IMR-90 (cell line): ENCODE measurements at regions of chr17 and their contacts with region 1.

Region 1: DNA sequence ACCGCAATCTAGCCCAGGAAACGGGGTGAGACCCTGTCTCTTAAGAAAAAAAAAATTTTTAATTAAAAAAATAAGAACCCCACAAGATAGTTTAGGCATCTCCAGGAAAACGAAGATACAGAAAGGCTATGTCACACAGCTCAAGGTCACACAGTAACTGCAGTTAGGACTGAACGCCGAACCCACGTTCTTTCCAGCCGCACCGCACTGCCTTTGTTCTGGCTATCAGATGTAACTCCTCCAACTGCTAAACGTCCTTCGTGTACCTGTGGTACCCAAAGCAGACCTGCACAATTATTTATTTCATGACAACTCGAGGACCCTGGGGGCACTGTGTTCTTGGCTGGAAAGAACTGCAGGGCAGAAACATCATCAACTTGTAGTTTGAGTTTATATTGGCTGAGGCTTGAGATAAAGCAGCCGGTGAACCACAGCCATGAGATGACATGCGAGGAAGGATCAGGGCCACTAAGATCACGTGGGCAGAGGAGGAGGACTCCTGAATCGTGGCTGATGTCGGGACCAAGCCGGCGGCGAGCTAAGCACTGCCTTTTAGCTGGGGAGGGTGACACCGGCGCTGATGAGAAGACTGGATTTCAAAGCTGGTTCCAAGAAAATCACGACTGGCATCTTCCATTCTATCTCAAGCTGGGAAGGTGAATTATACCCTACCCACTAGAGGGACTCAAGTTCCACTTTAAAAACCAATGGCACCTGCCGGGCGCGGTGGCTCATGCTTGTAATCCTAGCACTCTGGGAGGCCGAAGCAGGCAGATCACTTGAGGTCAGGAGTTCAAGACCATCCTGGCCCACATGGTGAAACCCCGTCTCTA is 20.7 kb upstream of the MNT start:
- DNase-seq: peak; percentile 50
- ATAC-seq: peak; percentile 10; the same call in 1 of the 2 replicates
- H3K4me3 ChIP-seq: no peak overlapping the region
- H3K27ac ChIP-seq: peak overlapping the region; percentile 50; the same call in 1 of the 2 replicates
- H3K4me1 ChIP-seq: peaks cover 22% of the 10 kb centered on the region
- H3K27me3 ChIP-seq: no peaks in the 10 kb centered on the region
- CTCF ChIP-seq: peak; percentile 42
- POLR2A ChIP-seq: no peak
- RAD21 ChIP-seq: peak; percentile 58

Region 2: DNA sequence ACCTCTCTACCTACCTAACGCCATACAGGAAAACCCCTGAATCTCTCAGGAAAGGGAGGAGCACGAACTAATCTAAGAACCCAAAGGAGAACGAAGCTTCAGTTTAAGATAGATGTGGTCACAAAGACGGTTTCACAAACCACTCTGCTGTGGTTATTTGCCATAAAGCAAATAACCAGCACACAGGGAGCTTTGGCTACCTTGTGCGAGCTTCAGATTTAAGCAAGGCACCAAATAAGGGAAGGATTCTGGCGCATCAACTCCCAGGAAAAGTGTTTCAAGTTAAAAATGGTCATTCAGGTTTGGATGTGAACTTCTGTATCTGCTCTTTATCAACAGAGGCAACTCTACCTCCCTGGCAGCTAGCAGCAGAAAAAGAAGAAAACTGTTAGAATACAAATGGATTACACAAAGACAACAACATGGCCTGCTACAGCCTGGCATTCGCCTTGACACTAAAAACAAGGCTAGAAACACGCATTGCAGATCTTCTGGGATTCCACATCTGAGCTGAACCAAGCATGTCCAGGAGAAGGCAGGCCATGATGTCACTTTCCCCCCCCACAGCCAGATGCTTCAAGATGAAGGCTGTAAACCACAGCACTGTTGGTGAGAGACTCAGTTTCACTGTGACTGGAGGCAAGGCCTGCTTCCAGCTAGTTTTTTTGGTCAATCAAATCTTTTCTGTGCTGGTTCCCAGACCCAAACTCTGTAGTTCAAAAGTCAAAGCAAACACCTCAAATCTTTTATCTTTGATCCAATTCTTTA is 161.6 kb before region 1 on chr17:
- CTCF ChIA-PET with region 1: no interaction called
- POLR2A ChIA-PET with region 1: no interaction called
- dilution Hi-C with region 1: no loop called
- in situ Hi-C with region 1: no loop called
- intact Hi-C with region 1: no loop called
- DNase-seq: peak; percentile 81
- ATAC-seq: peak; percentile 59; the same call in 1 of the 2 replicates
- H3K4me3 ChIP-seq: no peak overlapping the region
- H3K27ac ChIP-seq: no peak overlapping the region
- H3K4me1 ChIP-seq: peaks cover 10% of the 10 kb centered on the region
- H3K27me3 ChIP-seq: no peaks in the 10 kb centered on the region
- CTCF ChIP-seq: no peak
- POLR2A ChIP-seq: no peak
- RAD21 ChIP-seq: no peak

Region 3: GRCh38 chr17:2366747-2367494 is 54.6 kb before region 1 on chr17:
- CTCF ChIA-PET with region 1: no interaction called
- POLR2A ChIA-PET with region 1: no interaction called
- dilution Hi-C with region 1: no loop called
- in situ Hi-C with region 1: no loop called
- intact Hi-C with region 1: no loop called
- DNase-seq: no peak
- ATAC-seq: 0 out of 2 replicates have a peak, but pooled peaks have one; percentile 12
- H3K4me3 ChIP-seq: no peak overlapping the region
- H3K27ac ChIP-seq: no peak overlapping the region
- H3K4me1 ChIP-seq: no peaks in the 10 kb centered on the region
- H3K27me3 ChIP-seq: no peaks in the 10 kb centered on the region
- CTCF ChIP-seq: 0 out of 2 replicates have a peak, but pooled peaks have one; percentile 10
- POLR2A ChIP-seq: no peak
- RAD21 ChIP-seq: no peak

Region 4: DNA sequence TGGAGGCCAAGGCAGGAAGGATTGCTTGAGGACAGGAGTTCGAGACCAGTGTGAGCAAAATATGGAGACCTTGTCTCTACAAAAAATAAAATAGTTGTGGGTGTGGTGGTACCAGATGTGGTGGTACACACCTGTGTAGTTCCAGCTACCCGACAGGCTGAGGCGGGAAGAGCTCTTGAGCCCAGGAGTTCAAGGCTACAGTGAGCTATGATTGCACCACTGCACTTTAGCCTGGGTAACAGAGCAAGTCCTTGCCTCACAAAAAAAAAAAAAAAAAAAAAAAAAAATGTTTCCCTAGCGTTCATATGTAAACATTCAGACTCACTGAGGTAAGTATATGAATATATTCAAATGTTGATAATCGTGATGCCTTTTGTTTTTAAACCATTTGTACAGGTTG is 250.5 kb after region 1 on chr17:
- CTCF ChIA-PET with region 1: no interaction called
- POLR2A ChIA-PET with region 1: no interaction called
- dilution Hi-C with region 1: no loop called
- in situ Hi-C with region 1: loop called (anchors 10 kb)
- intact Hi-C with region 1: no loop called
- DNase-seq: no peak
- ATAC-seq: no peak
- H3K4me3 ChIP-seq: no peak overlapping the region
- H3K27ac ChIP-seq: no peak overlapping the region
- H3K4me1 ChIP-seq: no peaks in the 10 kb centered on the region
- H3K27me3 ChIP-seq: no peaks in the 10 kb centered on the region
- CTCF ChIP-seq: no peak
- POLR2A ChIP-seq: no peak
- RAD21 ChIP-seq: no peak

Region 5: DNA sequence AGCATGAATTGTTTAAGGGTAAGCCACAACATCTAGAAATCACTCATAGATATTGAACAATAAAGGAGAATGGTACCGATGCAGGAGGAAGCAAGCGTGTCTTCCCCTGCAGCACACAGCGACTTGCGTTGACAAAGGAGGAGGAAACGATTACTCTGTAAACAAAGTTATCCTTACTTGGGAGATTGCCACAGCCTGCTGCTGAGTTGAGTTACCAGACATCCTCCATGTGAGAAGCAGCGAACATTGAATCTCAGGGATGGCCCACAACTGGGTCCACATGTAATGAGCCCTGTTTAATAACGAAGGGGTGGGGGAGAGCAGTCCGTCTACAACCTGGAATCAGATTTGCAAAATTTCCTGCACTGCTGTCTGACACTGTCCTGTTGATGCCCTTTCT is 262.4 kb after region 1 on chr17:
- CTCF ChIA-PET with region 1: no interaction called
- POLR2A ChIA-PET with region 1: no interaction called
- dilution Hi-C with region 1: no loop called
- in situ Hi-C with region 1: loop called (anchors 10 kb)
- intact Hi-C with region 1: loop called (anchors 5 kb)
- DNase-seq: peak; percentile 75
- ATAC-seq: peak; percentile 35
- H3K4me3 ChIP-seq: no peak overlapping the region
- H3K27ac ChIP-seq: no peak overlapping the region
- H3K4me1 ChIP-seq: peaks cover 8% of the 10 kb centered on the region
- H3K27me3 ChIP-seq: no peaks in the 10 kb centered on the region
- CTCF ChIP-seq: no peak
- POLR2A ChIP-seq: no peak
- RAD21 ChIP-seq: no peak

Region 6: GRCh38 chr17:3282901-3283300 is 861.4 kb after region 1 on chr17:
- CTCF ChIA-PET with region 1: no interaction called
- POLR2A ChIA-PET with region 1: no interaction called
- dilution Hi-C with region 1: no loop called
- in situ Hi-C with region 1: no loop called
- intact Hi-C with region 1: no loop called
- DNase-seq: no peak
- ATAC-seq: no peak
- H3K4me3 ChIP-seq: no peak overlapping the region
- H3K27ac ChIP-seq: no peak overlapping the region
- H3K4me1 ChIP-seq: no peaks in the 10 kb centered on the region
- H3K27me3 ChIP-seq: no peaks in the 10 kb centered on the region
- CTCF ChIP-seq: no peak
- POLR2A ChIP-seq: no peak
- RAD21 ChIP-seq: no peak